Activated CD4-positive, alpha-beta memory T cell treated with anti-CD3 and anti-CD28 coated beads for 36 hours (primary cell): ENCODE measurements at regions of chr14 and their contacts with region 1.

Region 1: DNA sequence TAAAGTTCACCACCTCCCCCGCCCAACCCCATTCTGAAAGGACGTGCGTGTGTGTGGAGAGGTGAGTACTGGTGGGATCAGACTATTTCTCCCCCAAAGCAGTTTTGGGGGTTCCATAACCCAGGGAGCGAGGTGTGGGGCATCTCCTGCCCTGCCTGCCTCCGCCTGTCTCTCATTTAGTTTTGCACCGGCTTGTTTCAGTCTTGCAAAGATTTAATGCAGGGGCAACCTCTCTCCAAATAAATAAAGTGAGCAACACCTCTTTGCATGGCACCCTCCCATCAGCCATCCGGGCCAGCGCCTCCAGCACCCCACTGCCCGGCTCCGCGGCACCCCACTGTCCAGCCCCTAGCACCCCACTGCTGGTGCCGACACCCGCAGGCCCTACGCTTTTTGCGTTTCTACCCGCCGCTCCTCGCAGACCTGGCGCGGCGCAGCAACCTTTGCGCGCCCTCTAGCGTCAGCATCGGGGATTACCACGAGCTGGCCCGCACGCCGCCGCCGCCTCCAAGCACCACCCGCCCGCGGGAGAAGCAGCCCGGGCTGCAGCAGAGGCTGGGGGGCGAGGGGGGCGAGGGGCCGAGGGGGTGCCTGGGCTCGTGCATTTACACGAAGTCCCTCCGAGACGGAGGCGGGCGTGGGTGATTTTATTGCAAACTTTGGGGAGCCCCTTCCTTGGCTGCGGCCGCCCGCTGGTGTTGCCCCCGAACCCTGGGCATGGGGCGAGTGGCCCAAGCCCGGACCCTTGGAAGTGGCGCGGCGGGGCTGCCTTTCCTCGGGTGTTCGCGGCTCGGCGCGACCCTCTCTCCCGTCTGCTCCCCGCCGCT is 55.8 kb upstream of the VRK1 start:
- DNase-seq: peak; percentile 80
- H3K4me3 Mint-ChIP-seq: peak overlapping the region; percentile 17
- H3K27ac Mint-ChIP-seq: no peak overlapping the region
- H3K4me1 Mint-ChIP-seq: peaks cover 10% of the 10 kb centered on the region
- H3K27me3 Mint-ChIP-seq: peaks cover 48% of the 10 kb centered on the region

Region 2: DNA sequence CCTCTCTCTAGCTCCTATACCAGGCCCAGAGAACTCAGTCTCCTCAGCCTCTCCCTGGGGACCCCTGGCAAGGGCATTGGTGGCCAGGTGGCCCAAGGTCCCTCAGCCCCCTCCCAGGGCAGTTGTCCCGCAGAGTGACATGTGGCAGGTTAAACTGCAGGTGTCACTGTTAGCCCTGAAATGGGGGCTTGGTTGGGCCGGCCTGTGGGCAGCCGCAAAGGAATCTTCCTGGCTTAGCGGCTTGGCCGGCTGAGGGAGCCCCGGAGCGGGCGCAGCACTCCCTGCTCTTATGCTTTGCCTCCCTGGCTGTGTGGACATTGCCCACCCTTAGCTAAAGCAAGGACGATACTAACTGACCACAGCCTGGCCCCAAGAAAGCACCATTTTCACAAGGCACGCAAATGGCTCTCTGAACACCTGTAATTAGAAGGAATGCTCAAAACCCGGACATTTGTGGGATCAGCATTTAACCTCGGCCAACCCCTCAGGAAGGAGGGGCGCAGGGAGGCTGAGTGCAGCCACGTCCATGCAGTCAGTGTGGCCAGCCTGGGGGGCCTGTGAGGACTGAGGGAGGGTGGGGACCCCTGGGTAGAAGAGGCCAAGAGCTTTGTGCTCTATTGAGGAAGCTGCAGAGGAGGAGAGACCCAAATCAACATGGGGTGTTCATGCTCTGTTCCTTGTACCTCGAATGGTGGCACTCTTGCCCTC is 157.0 kb before region 1 on chr14:
- CTCF ChIA-PET with region 1: interaction called, 8 read pairs
- POLR2A ChIA-PET with region 1: no interaction called
- intact Hi-C with region 1: loop called (anchors 2 kb)
- DNase-seq: peak; percentile 53
- H3K4me3 Mint-ChIP-seq: no peak overlapping the region
- H3K27ac Mint-ChIP-seq: no peak overlapping the region
- H3K4me1 Mint-ChIP-seq: no peaks in the 10 kb centered on the region
- H3K27me3 Mint-ChIP-seq: peaks cover 15% of the 10 kb centered on the region

Region 3: GRCh38 chr14:96752594-96752993 is 11.2 kb after region 1 on chr14:
- CTCF ChIA-PET with region 1: interaction called, 13 read pairs
- POLR2A ChIA-PET with region 1: no interaction called
- intact Hi-C with region 1: no loop called
- DNase-seq: no peak
- H3K4me3 Mint-ChIP-seq: no peak overlapping the region
- H3K27ac Mint-ChIP-seq: no peak overlapping the region
- H3K4me1 Mint-ChIP-seq: no peaks in the 10 kb centered on the region
- H3K27me3 Mint-ChIP-seq: peaks cover 12% of the 10 kb centered on the region